ENCODE measurements at regions of chr15 and their contacts with region 1.

Region 1: DNA sequence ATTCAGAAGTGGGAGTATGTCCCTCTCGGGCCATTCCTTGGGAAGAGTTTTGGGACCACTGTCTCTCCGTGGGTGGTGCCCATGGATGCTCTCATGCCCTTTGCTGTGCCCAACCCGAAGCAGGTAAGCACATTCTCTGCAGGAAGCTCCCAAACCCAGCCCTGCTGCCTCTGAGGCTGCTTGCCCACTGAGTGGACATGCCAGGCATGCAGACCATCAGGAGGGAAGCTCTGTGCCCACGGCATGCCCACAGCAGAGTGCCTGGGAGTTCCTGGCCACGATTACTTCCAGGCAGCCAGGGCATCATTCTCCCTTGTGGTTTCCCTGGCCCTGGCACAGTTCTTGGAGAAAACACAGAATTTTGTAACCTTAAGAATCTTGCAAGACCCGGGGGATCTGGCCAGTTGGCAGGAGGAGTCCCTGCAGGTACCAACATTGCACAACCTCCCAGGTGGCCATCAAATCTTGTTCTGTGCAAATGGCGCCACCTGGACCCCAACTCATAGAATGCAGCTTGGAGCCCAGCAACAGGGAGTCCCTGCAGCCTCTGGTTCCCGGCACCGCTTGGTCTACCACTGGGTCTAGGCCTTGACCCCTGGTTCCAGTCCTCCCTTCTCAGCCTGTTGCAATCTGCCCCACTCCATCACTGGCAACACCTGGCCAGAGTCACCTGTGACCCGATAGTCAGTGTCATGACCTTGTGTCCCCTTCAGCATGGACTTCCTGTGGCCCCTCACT is 20.4 kb downstream of the FAH start:
- DNase-seq: peak; percentile 74
- ATAC-seq: peak; percentile 70
- H3K4me3 ChIP-seq: no peak overlapping the region
- H3K27ac ChIP-seq: no peak overlapping the region
- H3K4me1 ChIP-seq: peaks cover 25% of the 10 kb centered on the region
- H3K27me3 ChIP-seq: no peaks in the 10 kb centered on the region
- CTCF ChIP-seq: peak; percentile 75

Region 2: DNA sequence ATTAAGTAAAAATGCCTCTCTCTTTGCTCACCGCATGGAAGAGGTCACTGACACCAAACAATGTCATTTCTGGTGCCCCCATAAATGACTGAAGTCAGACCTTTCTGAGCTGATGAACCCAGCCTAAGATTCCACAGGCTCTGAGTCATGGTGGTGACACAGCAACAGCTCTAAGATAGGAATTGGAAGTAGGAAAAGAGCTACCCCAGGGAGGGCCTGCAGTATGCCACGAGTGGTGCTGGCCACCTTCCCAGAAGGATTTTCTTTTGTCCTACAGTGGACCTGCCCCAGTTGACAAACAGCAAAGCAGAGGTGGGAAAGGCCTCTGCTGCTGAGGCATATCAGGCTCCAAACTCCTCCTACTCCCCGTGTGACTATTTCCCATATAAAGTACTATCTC is 533.0 kb before region 1 on chr15:
- CTCF ChIA-PET with region 1: no interaction called
- POLR2A ChIA-PET with region 1: no interaction called
- intact Hi-C with region 1: no loop called
- DNase-seq: peak; percentile 88
- ATAC-seq: peak; percentile 95
- H3K4me3 ChIP-seq: no peak overlapping the region
- H3K27ac ChIP-seq: 0 out of 2 replicates have a peak overlapping the region, but pooled peaks have one; percentile 11
- H3K4me1 ChIP-seq: peaks cover 14% of the 10 kb centered on the region
- H3K27me3 ChIP-seq: no peaks in the 10 kb centered on the region
- CTCF ChIP-seq: no peak

Region 3: DNA sequence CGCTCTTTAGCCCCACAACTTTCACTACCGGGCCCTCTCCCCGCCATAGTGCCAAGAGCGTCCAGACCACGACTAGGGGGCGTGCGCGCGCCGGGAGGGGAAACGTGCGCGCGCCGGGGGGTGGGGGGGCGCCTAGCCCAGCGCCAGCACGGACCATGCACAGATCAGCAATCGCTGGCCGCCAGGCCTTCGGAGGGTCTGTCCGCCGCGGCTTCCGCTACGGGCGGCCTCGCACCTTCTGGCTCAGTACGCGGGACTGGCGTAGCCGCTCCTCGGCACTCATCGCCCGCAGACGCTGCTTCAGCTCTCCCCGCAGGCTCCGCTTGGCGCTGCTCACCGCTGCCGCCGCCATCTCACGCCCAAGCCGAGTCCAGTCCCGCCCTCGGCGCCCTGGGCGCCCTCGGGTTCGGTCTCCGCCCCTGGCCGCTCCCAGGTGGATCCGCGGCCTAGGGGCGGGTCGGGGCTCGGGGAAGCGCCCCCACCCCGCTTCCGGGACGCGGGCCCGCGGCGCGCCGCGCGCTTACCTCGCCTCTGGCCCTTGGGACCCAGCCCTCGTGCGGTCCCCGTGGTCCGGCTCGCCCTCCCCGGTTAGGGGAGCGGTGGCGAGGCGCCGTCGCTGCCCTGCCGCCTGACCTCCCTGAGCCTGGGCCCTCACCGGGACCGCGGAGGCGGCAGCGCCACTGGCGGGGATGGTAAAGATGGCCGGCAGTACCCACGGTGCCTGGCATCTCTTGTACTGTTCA is 276.4 kb before region 1 on chr15 and contains the start of gene MTHFS:
- CTCF ChIA-PET with region 1: no interaction called
- POLR2A ChIA-PET with region 1: no interaction called
- intact Hi-C with region 1: loop called (anchors 10 kb)
- DNase-seq: peak; percentile 86
- ATAC-seq: peak; percentile 95
- H3K4me3 ChIP-seq: peak within 1 kb of the TSS; percentile 74
- H3K27ac ChIP-seq: peak within 1 kb of the TSS; percentile 65
- H3K4me1 ChIP-seq: peaks cover 24% of the 10 kb centered on the region
- H3K27me3 ChIP-seq: no peaks in the 10 kb centered on the region
- CTCF ChIP-seq: peak; percentile 52
- total RNA-seq, gene MTHFS: 28.8 and 53.1 TPM in 2 replicates

Region 4: DNA sequence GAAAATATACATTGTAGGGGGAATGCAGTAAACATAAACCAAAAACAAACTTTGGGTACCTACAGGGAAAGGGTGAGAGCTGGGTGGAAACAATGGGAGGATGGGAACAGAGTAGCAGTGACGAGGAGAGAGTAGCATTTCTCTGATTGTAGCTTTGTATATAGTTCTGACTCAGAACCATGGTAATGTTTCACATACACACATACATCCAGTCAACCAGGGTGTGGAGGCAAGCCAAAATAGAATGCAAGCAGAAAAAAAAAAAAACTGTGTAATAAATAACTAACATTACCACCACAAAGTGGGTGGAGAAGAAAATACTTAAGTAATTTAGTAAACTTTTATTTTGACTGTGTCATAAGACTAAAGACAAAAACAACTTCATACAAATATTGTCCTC is 229.4 kb before region 1 on chr15:
- CTCF ChIA-PET with region 1: no interaction called
- POLR2A ChIA-PET with region 1: no interaction called
- intact Hi-C with region 1: no loop called
- DNase-seq: no peak
- ATAC-seq: no peak
- H3K4me3 ChIP-seq: no peak overlapping the region
- H3K27ac ChIP-seq: no peak overlapping the region
- H3K4me1 ChIP-seq: peaks cover 6% of the 10 kb centered on the region; the same call in 1 of the 2 replicates
- H3K27me3 ChIP-seq: no peaks in the 10 kb centered on the region
- CTCF ChIP-seq: no peak

Region 5: GRCh38 chr15:79989682-79990081 is 183.5 kb before region 1 on chr15:
- CTCF ChIA-PET with region 1: no interaction called
- POLR2A ChIA-PET with region 1: no interaction called
- intact Hi-C with region 1: loop called (anchors 5 kb)
- DNase-seq: no peak
- ATAC-seq: no peak
- H3K4me3 ChIP-seq: no peak overlapping the region
- H3K27ac ChIP-seq: no peak overlapping the region
- H3K4me1 ChIP-seq: peaks cover 4% of the 10 kb centered on the region
- H3K27me3 ChIP-seq: no peaks in the 10 kb centered on the region
- CTCF ChIP-seq: no peak

Region 6: GRCh38 chr15:80072285-80072994 is 100.8 kb before region 1 on chr15:
- CTCF ChIA-PET with region 1: no interaction called
- POLR2A ChIA-PET with region 1: no interaction called
- intact Hi-C with region 1: loop called (anchors 5 kb)
- DNase-seq: peak; percentile 92
- ATAC-seq: peak; percentile 94
- H3K4me3 ChIP-seq: peak overlapping the region; percentile 78
- H3K27ac ChIP-seq: no peak overlapping the region
- H3K4me1 ChIP-seq: peaks cover 32% of the 10 kb centered on the region
- H3K27me3 ChIP-seq: no peaks in the 10 kb centered on the region
- CTCF ChIP-seq: no peak

Region 7: DNA sequence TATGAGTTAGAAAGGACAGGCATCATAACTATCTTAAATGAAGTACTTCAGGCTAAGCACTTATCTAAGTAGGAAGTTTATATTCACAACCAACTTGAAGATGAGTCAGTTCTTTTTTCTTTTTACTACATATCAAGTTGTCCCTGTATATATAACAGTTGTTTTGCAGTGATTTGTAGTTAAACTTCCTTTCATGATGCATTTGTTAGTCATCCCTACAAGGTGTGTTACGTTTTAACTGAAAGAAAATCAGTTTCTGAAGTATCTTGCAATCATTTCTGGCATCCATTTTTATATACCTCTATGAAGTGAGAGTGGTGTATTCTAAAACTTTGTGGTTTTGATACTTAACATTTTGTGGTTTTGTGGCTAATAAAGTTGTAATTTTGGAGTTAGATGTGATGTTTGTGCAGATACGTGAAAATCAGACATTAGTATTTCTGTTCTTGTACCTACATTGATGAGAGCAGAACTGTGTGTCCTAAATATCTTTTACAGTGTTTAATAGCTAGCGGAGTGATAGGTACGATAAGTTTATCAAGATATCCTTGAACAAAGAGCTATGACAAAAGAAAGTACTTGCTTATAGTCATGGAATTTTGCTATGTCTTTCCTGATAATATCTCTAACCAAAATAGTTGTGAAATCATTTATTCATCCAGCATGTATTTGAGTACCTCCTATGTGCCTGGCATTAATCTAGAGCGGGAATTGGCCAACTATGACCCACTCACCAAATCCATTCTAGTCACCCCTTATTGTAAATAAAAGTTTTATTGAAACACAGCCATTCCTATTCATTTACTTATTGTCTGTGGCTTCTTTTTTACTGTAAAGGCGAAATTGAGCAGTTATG is 67.4 kb before region 1 on chr15:
- CTCF ChIA-PET with region 1: no interaction called
- POLR2A ChIA-PET with region 1: no interaction called
- intact Hi-C with region 1: loop called (anchors 5 kb)
- DNase-seq: peak; percentile 84
- ATAC-seq: peak; percentile 91
- H3K4me3 ChIP-seq: peak overlapping the region; percentile 45
- H3K27ac ChIP-seq: peak overlapping the region; percentile 95
- H3K4me1 ChIP-seq: peaks cover 30% of the 10 kb centered on the region
- H3K27me3 ChIP-seq: no peaks in the 10 kb centered on the region
- CTCF ChIP-seq: no peak

Region 8: DNA sequence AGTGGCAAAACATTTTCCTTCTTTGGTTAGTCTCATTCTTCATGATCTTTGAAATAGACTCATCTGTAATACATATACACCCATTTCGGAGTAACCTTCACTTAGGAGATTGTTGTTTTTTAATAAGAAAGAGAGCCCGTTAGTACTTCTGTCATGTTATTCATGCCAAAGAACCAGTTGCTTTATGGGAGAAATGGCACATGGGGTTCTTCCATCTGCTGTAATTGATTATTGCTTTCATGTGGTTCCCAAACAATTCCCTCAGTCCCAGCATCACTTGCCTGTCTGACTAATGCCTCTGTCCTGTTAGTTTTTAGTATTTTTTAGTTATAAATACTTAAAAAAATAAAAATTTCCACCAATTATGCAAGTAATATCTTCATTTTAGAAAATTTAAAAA is 54.2 kb before region 1 on chr15:
- CTCF ChIA-PET with region 1: no interaction called
- POLR2A ChIA-PET with region 1: no interaction called
- intact Hi-C with region 1: no loop called
- DNase-seq: no peak
- ATAC-seq: no peak
- H3K4me3 ChIP-seq: no peak overlapping the region
- H3K27ac ChIP-seq: no peak overlapping the region
- H3K4me1 ChIP-seq: no peaks in the 10 kb centered on the region
- H3K27me3 ChIP-seq: no peaks in the 10 kb centered on the region
- CTCF ChIP-seq: no peak